PC-9 (cell line): ENCODE measurements at regions of chr7 and their contacts with region 1.

Region 1: GRCh38 chr7:81150951-81151361 is 232.1 kb upstream of the SEMA3C start:
- DNase-seq: no peak
- H3K4me3 ChIP-seq: no peak overlapping the region
- H3K27ac ChIP-seq: no peak overlapping the region
- H3K4me1 ChIP-seq: no peaks in the 10 kb centered on the region
- H3K27me3 ChIP-seq: no peaks in the 10 kb centered on the region
- CTCF ChIP-seq: no peak

Region 2: GRCh38 chr7:80533287-80533686 is 617.7 kb before region 1 on chr7:
- CTCF ChIA-PET with region 1: no interaction called
- POLR2A ChIA-PET with region 1: no interaction called
- intact Hi-C with region 1: no loop called
- DNase-seq: peak in 1 of 2 experiments; percentile 40
- H3K4me3 ChIP-seq: no peak overlapping the region
- H3K27ac ChIP-seq: no peak overlapping the region
- H3K4me1 ChIP-seq: no peaks in the 10 kb centered on the region
- H3K27me3 ChIP-seq: no peaks in the 10 kb centered on the region
- CTCF ChIP-seq: no peak

Region 3: GRCh38 chr7:80859272-80859970 is 291.5 kb before region 1 on chr7:
- CTCF ChIA-PET with region 1: no interaction called
- POLR2A ChIA-PET with region 1: interaction called, 15 read pairs
- intact Hi-C with region 1: no loop called
- DNase-seq: no peak
- H3K4me3 ChIP-seq: no peak overlapping the region
- H3K27ac ChIP-seq: no peak overlapping the region
- H3K4me1 ChIP-seq: peaks cover 22% of the 10 kb centered on the region
- H3K27me3 ChIP-seq: no peaks in the 10 kb centered on the region
- CTCF ChIP-seq: no peak

Region 4: GRCh38 chr7:81583882-81584533 is 433.1 kb after region 1 on chr7:
- CTCF ChIA-PET with region 1: no interaction called
- POLR2A ChIA-PET with region 1: no interaction called
- intact Hi-C with region 1: no loop called
- DNase-seq: no peak
- H3K4me3 ChIP-seq: no peak overlapping the region
- H3K27ac ChIP-seq: no peak overlapping the region
- H3K4me1 ChIP-seq: no peaks in the 10 kb centered on the region
- H3K27me3 ChIP-seq: no peaks in the 10 kb centered on the region
- CTCF ChIP-seq: no peak